ENCODE measurements at regions of chrX and their contacts with region 1.

Region 1: GRCh38 chrX:9859711-9860555 is 73.7 kb downstream of the SHROOM2 start:
- DNase-seq: no peak
- H3K4me3 ChIP-seq: no peak overlapping the region
- H3K27ac ChIP-seq: no peak overlapping the region
- H3K4me1 ChIP-seq: peaks cover 21% of the 10 kb centered on the region
- H3K27me3 ChIP-seq: no peaks in the 10 kb centered on the region
- CTCF ChIP-seq: no peak
- POLR2A ChIP-seq: no peak

Region 2: DNA sequence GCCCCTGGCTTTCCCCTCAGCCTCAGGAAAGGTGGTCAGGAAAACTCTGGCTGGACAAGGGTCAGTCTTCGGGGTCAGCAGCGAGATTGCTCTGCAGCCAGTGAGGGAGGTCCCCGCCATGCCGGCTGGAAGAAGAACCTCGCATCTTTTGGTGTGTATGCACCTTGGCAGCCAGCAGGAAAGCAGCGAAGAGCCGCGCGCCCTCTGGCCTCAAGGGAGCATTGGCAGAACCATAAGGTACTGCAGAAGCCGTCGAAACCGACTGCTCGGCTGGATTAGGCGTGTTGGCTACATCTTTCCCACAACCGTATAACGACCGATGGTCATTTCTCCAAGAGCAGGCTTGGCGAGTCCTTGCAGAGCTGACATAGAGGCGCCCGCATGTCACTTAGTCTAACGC is 142.6 kb before region 1 on chrX:
- CTCF ChIA-PET with region 1: no interaction called
- POLR2A ChIA-PET with region 1: no interaction called
- dilution Hi-C with region 1: no loop called
- intact Hi-C with region 1: no loop called
- DNase-seq: no peak
- H3K4me3 ChIP-seq: no peak overlapping the region
- H3K27ac ChIP-seq: no peak overlapping the region
- H3K4me1 ChIP-seq: no peaks in the 10 kb centered on the region
- H3K27me3 ChIP-seq: no peaks in the 10 kb centered on the region
- CTCF ChIP-seq: no peak
- POLR2A ChIP-seq: no peak

Region 3: DNA sequence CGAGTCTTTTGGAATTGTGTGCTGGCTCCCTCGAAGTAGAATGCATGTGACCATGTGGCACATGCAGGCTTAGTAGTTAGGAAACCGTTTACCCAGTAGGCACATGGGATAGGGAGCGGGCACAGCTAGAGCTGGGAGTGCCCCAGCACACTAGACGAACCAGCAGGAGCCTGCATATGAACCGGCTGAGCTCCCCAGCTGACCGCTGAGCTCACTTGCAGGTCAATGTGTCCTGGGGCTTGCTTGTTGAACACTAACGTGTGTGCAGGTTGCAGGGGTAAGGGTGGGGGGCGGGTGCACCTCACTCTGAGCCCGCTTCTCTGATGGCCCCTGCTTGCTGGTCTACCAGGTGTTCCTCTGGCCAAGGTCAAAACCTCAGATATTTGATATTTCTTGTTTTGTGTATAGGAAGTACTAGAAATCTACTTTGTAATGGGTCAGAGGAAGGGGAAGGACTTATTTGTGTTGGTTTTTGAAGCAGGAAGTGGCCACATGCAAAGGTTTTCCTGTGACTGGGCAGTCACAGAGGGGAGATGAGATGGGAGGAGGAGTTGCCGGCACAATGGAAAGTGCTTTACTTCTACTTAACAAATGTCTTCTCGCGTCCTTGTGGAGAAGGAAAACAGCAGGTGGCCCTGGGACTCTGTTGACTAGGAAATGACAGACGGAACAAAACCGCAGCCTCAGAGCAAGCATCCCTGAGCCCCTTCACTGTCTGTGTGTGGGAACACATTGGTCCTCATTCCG is 27.3 kb before region 1 on chrX:
- CTCF ChIA-PET with region 1: no interaction called
- POLR2A ChIA-PET with region 1: no interaction called
- dilution Hi-C with region 1: no loop called
- intact Hi-C with region 1: loop called (anchors 2 kb)
- DNase-seq: peak; percentile 73
- H3K4me3 ChIP-seq: no peak overlapping the region
- H3K27ac ChIP-seq: peak overlapping the region; percentile 42
- H3K4me1 ChIP-seq: peaks cover 24% of the 10 kb centered on the region
- H3K27me3 ChIP-seq: no peaks in the 10 kb centered on the region
- CTCF ChIP-seq: no peak
- POLR2A ChIP-seq: no peak

Region 4: GRCh38 chrX:10360116-10360515 is 500.2 kb after region 1 on chrX:
- CTCF ChIA-PET with region 1: no interaction called
- POLR2A ChIA-PET with region 1: no interaction called
- dilution Hi-C with region 1: no loop called
- intact Hi-C with region 1: no loop called
- DNase-seq: no peak
- H3K4me3 ChIP-seq: no peak overlapping the region
- H3K27ac ChIP-seq: no peak overlapping the region
- H3K4me1 ChIP-seq: no peaks in the 10 kb centered on the region
- H3K27me3 ChIP-seq: no peaks in the 10 kb centered on the region
- CTCF ChIP-seq: no peak
- POLR2A ChIP-seq: no peak

Region 5: DNA sequence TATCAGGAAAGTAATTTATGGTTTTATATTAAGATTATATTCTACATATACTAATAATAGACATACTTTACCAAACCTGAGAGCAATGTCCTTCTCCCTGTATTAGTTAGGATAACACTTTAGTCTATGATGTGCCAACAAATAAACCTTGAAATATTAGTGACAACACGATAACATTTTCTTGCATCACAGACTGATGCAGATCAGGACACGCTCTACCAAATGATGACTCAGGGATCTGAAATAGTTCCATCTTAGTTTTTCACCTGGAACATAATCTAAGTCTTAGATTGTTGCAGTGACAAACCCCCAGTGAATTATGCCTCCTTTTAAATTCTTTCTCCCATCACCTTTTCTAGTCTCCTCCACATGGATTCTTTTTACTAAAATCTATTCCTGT is 511.0 kb after region 1 on chrX:
- CTCF ChIA-PET with region 1: no interaction called
- POLR2A ChIA-PET with region 1: no interaction called
- dilution Hi-C with region 1: no loop called
- intact Hi-C with region 1: no loop called
- DNase-seq: no peak
- H3K4me3 ChIP-seq: no peak overlapping the region
- H3K27ac ChIP-seq: no peak overlapping the region
- H3K4me1 ChIP-seq: no peaks in the 10 kb centered on the region
- H3K27me3 ChIP-seq: no peaks in the 10 kb centered on the region
- CTCF ChIP-seq: no peak
- POLR2A ChIP-seq: no peak